ENCODE measurements at regions of chr12 and their contacts with region 1.

Region 1: DNA sequence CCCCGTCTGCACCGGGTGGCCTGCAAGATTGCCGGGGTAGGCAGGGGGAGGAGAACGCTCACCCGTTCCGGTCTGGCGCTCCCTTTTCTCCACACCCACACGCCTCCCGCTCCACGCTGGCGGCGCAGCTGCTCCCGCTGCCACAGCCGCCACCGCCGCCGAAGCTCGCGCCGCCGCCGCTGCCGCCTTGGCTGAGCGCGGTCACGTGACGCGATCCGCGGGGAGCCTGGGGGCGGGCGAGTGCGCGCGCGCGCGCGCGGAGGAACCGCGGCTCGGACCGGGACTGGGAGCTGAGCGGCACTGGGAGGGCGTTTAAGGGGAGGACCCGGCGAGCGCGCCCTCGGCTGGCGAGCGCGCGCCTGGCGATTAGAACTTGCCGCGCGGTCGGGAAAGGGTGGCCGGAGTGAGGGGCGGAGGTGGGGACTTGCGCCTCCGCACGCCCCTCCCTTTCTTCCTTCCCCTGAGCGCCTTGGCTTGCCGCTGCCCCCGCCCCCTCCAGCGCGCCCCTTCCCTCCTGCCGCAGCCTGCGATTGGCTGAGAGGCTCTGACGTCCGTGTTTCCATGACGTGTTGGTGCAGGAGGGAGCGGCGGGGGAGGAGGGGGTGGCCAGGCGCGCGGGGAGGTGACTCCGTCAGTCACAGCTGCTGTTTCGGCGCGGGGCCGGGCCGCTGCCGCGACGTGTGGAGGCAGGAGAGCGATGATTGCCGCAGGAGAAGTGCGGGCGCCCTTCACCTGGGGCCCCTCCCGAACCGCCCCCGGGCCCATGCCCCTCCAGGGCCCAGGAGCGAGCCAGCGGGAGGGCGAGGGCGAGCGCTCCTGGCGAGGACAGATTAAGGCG is 738 bp upstream of the ATP2B1 start:
- DNase-seq: peak; percentile 99
- ATAC-seq: peak; percentile 89 to 91 (median 90)
- H3K4me3 ChIP-seq: peak overlapping the region; percentile 91
- H3K27ac ChIP-seq: peak overlapping the region; percentile 94
- H3K4me1 ChIP-seq: peaks cover 23% of the 10 kb centered on the region
- H3K27me3 ChIP-seq: no peaks in the 10 kb centered on the region
- CTCF ChIP-seq: no peak

Region 2: GRCh38 chr12:89665556-89665955 is 43.8 kb before region 1 on chr12:
- intact Hi-C with region 1: loop called in 1 of 2 experiments (anchors 5 kb)
- DNase-seq: no peak
- ATAC-seq: no peak
- H3K4me3 ChIP-seq: no peak overlapping the region
- H3K27ac ChIP-seq: no peak overlapping the region
- H3K4me1 ChIP-seq: peaks cover 51% of the 10 kb centered on the region
- H3K27me3 ChIP-seq: no peaks in the 10 kb centered on the region
- CTCF ChIP-seq: no peak

Region 3: DNA sequence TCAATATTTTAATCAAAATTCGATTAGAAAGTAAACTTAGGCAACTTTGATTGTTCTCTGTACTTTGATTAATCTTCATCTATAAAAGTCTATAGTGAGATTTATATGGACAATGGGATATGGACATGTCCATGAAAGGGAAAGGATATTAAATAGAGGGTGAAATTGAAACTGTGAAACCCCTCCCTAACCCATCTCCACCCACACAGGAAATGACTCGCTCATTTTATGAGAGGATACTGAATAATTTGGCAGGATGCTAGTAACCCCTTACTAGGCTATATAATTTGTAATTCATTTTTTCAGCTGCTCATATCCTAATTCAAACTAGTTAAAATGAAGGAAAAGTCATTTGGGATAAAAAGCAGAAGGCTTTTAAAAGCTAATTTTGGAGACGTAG is 327.3 kb after region 1 on chr12:
- intact Hi-C with region 1: loop called in 1 of 2 experiments (anchors 10 kb)
- DNase-seq: no peak
- ATAC-seq: no peak
- H3K4me3 ChIP-seq: no peak overlapping the region
- H3K27ac ChIP-seq: no peak overlapping the region
- H3K4me1 ChIP-seq: peaks cover 6% of the 10 kb centered on the region
- H3K27me3 ChIP-seq: no peaks in the 10 kb centered on the region
- CTCF ChIP-seq: no peak

Region 4: GRCh38 chr12:90253674-90254181 is 544.4 kb after region 1 on chr12:
- intact Hi-C with region 1: loop called in 1 of 2 experiments (anchors 10 kb)
- DNase-seq: peak; percentile 81 to 92
- ATAC-seq: peak; percentile 96 to 100 (median 98)
- H3K4me3 ChIP-seq: peak overlapping the region; percentile 9
- H3K27ac ChIP-seq: peak overlapping the region; percentile 73
- H3K4me1 ChIP-seq: peaks cover 42% of the 10 kb centered on the region
- H3K27me3 ChIP-seq: no peaks in the 10 kb centered on the region
- CTCF ChIP-seq: peak; percentile 41

Measured in psoas muscle (tissue), 8 donors.